ENCODE measurements at regions of chr7 and their contacts with region 1.

Region 1: DNA sequence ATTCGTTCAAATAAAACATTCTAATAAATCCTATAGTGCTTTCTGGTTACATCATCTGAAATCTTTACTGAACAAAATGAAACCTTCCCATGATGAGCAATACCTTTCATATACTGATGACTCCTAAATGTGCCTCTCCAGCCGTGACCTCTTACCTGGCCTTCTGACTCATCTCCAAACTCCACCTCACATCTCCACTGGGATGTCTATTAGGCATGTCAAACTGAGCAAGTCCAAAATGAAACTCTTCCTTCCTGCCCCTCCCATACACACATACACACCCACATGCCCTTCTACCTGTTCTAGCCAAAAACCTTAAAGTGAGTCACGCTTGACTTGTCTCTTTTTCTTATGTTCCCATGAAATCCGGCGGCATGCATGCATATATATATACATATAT is 22.9 kb downstream of the GSAP start:
- DNase-seq: no peak
- H3K4me3 Mint-ChIP-seq: no peak overlapping the region
- H3K27ac Mint-ChIP-seq: peak overlapping the region; percentile 13
- H3K4me1 Mint-ChIP-seq: peaks cover 20% of the 10 kb centered on the region
- H3K27me3 Mint-ChIP-seq: no peaks in the 10 kb centered on the region

Region 2: DNA sequence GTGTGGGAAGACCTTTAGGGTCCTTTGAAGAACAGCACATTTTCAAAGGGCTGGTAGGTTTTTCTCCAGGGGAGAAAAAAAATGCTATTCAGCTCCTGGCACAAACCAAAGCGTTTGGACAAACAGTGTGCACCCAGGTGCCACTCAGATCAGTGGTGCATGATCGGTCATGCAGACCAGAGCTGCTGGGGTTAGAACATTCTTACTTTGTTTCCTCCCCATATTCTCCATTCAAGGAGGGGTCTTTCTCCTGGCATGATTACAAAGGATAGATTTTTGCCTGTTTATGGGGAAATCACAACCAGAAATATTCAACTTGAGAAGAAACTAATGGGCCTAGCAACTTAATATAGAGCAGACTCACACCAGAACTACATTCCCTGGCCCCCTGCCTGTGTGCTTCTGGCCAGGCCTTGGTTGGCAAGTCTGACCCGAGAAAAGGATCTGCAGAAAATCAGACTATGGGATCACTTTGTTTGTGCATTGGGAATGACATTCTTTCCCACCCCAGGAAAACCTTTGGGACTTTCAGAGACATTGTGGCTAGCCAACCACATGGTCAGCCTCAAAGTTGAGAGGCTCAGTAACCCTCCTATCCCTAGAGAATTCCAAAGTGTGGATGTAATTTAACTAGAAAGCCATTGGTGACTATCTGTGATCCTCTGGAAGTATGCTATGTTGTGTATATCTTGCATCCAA is 111.3 kb before region 1 on chr7:
- intact Hi-C with region 1: no loop called
- DNase-seq: no peak
- H3K4me3 Mint-ChIP-seq: no peak overlapping the region
- H3K27ac Mint-ChIP-seq: no peak overlapping the region
- H3K4me1 Mint-ChIP-seq: no peaks in the 10 kb centered on the region
- H3K27me3 Mint-ChIP-seq: peaks cover 4% of the 10 kb centered on the region

Region 3: GRCh38 chr7:77415823-77416622 is 22.8 kb after region 1 on chr7 and contains the start of gene GSAP:
- intact Hi-C with region 1: loop called (anchors 1 kb)
- DNase-seq: peak; percentile 38
- H3K4me3 Mint-ChIP-seq: peak within 1 kb of the TSS; percentile 50
- H3K27ac Mint-ChIP-seq: peak within 1 kb of the TSS; percentile 58
- H3K4me1 Mint-ChIP-seq: peaks cover 20% of the 10 kb centered on the region
- H3K27me3 Mint-ChIP-seq: peaks cover 30% of the 10 kb centered on the region
- total RNA-seq, gene GSAP: 1.3 and 1.6 TPM in 2 replicates

Region 4: DNA sequence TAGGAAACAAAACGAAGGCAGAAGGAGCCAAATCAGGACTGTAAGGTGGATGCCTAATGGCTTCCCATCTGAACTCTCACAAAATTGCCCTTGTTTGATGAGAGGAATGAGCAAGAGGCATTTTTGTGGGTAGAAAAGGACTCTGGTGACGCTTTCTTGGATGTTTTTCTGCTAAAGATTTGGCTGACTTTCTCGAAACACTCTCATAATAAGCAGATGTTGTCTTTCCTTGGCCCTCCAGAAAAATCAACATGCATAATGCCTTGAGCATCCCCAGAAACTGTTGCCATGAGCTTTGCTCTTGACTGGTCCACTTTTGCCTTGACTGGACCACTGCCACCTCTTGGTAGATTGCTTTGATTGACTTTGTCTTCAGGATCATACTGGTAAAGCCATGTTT is 157.3 kb after region 1 on chr7:
- intact Hi-C with region 1: no loop called
- DNase-seq: no peak
- H3K4me3 Mint-ChIP-seq: no peak overlapping the region
- H3K27ac Mint-ChIP-seq: no peak overlapping the region
- H3K4me1 Mint-ChIP-seq: peaks cover 5% of the 10 kb centered on the region
- H3K27me3 Mint-ChIP-seq: peaks cover 3% of the 10 kb centered on the region

Measured in activated T-helper 1 cell treated with anti-CD3 and anti-CD28 coated beads, Interleukin-12 subunit alpha, Interleukin-12 subunit beta, Interleukin-2, Interleukin-4 antibody, amounts not matched to agents 30 ng/mL and 10 ng/mL and 1 ng/mL, durations not matched to agents 14 hours and 24 hours and 36 hours (primary cell).